ENCODE measurements at regions of chr1 and their contacts with region 1.

Region 1: GRCh38 chr1:234125283-234125682 is 220.8 kb downstream of the SLC35F3 start:
- DNase-seq: peak; percentile 56 to 82
- H3K4me3 ChIP-seq: no peak overlapping the region
- H3K27ac ChIP-seq: no peak overlapping the region
- H3K4me1 ChIP-seq: 0 out of 7 replicates have a peak, but pooled peaks cover 0 to 2% (median 0%) of the 10 kb centered on the region in 4 experiments
- H3K27me3 ChIP-seq: no peaks in the 10 kb centered on the region
- CTCF ChIP-seq: peak; percentile 79 to 94 (median 89)
- EP300 ChIP-seq: no peak
- POLR2A ChIP-seq: no peak
- RAD21 ChIP-seq: peak; percentile 96 to 97

Region 2: GRCh38 chr1:233695901-233696300 is 429.4 kb before region 1 on chr1:
- CTCF ChIA-PET with region 1: no interaction called
- POLR2A ChIA-PET with region 1: no interaction called
- DNase-seq: no peak
- H3K4me3 ChIP-seq: no peak overlapping the region
- H3K27ac ChIP-seq: no peak overlapping the region
- H3K4me1 ChIP-seq: no peaks in the 10 kb centered on the region
- H3K27me3 ChIP-seq: no peaks in the 10 kb centered on the region
- CTCF ChIP-seq: no peak
- EP300 ChIP-seq: no peak
- POLR2A ChIP-seq: no peak
- RAD21 ChIP-seq: no peak

Region 3: GRCh38 chr1:234114648-234115307 is 10.5 kb before region 1 on chr1:
- CTCF ChIA-PET with region 1: interaction called, 60 read pairs
- POLR2A ChIA-PET with region 1: no interaction called
- DNase-seq: no peak
- H3K4me3 ChIP-seq: no peak overlapping the region
- H3K27ac ChIP-seq: no peak overlapping the region
- H3K4me1 ChIP-seq: no peaks in the 10 kb centered on the region
- H3K27me3 ChIP-seq: no peaks in the 10 kb centered on the region
- CTCF ChIP-seq: peak in 2 of 3 experiments; percentile 55 to 63; a peak in 3 of 4 replicates
- EP300 ChIP-seq: no peak
- POLR2A ChIP-seq: no peak
- RAD21 ChIP-seq: peak; percentile 71 to 75

Region 4: DNA sequence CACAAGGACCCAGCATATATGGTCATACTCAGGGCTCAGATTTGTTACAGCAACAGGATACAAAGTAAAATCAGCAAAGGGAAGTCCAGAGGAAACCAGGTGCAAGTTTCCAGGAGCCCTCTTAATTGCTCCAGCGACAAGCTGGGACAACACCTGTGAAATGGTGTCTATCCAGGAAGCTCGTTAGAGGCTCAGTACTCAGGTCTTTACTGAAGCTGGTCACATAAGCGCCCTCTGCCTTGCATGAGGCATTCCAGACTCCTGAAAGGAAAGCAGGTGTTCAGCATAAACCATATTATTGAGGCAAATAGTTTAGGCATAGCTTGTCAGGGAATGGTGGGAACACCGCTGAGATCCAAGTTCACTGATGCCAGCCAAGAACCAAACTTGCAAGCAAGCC is 10.2 kb after region 1 on chr1:
- CTCF ChIA-PET with region 1: interaction called, 24 read pairs
- POLR2A ChIA-PET with region 1: no interaction called
- DNase-seq: no peak
- H3K4me3 ChIP-seq: no peak overlapping the region
- H3K27ac ChIP-seq: no peak overlapping the region
- H3K4me1 ChIP-seq: no peaks in the 10 kb centered on the region
- H3K27me3 ChIP-seq: no peaks in the 10 kb centered on the region
- CTCF ChIP-seq: no peak
- EP300 ChIP-seq: no peak
- POLR2A ChIP-seq: no peak
- RAD21 ChIP-seq: no peak

Region 5: GRCh38 chr1:234188454-234188792 is 63.1 kb after region 1 on chr1:
- CTCF ChIA-PET with region 1: interaction called, 37 read pairs
- POLR2A ChIA-PET with region 1: no interaction called
- DNase-seq: peak; percentile 64 to 85
- H3K4me3 ChIP-seq: no peak overlapping the region
- H3K27ac ChIP-seq: peak overlapping the region; percentile 65; the same call in 1 of the 2 replicates
- H3K4me1 ChIP-seq: peaks cover 0 to 5% (median 2%) of the 10 kb centered on the region in 4 experiments; a peak in 4 of 7 replicates
- H3K27me3 ChIP-seq: no peaks in the 10 kb centered on the region
- CTCF ChIP-seq: peak; percentile 69 to 73 (median 71)
- EP300 ChIP-seq: no peak; a peak in 1 of 3 replicates
- POLR2A ChIP-seq: no peak
- RAD21 ChIP-seq: peak; percentile 53 to 58

Region 6: GRCh38 chr1:234326497-234327366 is 201.4 kb after region 1 on chr1:
- CTCF ChIA-PET with region 1: interaction called, 36 read pairs
- POLR2A ChIA-PET with region 1: no interaction called
- DNase-seq: peak; percentile 41 to 88
- H3K4me3 ChIP-seq: peak overlapping the region in 1 of 4 experiments; percentile 50; a peak in 1 of 8 replicates
- H3K27ac ChIP-seq: no peak overlapping the region
- H3K4me1 ChIP-seq: peaks cover 0 to 3% (median under 1%) of the 10 kb centered on the region in 4 experiments; a peak in 1 of 7 replicates
- H3K27me3 ChIP-seq: no peaks in the 10 kb centered on the region
- CTCF ChIP-seq: peak; percentile 73 to 85 (median 77)
- EP300 ChIP-seq: no peak
- POLR2A ChIP-seq: no peak
- RAD21 ChIP-seq: peak; percentile 57 to 67